ENCODE measurements at regions of chr2 and their contacts with region 1.

Region 1: GRCh38 chr2:37414470-37414949 is 70.1 kb downstream of the QPCT start:
- DNase-seq: no peak
- H3K4me3 Mint-ChIP-seq: no peak overlapping the region
- H3K27ac Mint-ChIP-seq: no peak overlapping the region
- H3K4me1 Mint-ChIP-seq: peaks cover 7% of the 10 kb centered on the region
- H3K27me3 Mint-ChIP-seq: no peaks in the 10 kb centered on the region
- CTCF ChIP-seq: peak; percentile 54

Region 2: DNA sequence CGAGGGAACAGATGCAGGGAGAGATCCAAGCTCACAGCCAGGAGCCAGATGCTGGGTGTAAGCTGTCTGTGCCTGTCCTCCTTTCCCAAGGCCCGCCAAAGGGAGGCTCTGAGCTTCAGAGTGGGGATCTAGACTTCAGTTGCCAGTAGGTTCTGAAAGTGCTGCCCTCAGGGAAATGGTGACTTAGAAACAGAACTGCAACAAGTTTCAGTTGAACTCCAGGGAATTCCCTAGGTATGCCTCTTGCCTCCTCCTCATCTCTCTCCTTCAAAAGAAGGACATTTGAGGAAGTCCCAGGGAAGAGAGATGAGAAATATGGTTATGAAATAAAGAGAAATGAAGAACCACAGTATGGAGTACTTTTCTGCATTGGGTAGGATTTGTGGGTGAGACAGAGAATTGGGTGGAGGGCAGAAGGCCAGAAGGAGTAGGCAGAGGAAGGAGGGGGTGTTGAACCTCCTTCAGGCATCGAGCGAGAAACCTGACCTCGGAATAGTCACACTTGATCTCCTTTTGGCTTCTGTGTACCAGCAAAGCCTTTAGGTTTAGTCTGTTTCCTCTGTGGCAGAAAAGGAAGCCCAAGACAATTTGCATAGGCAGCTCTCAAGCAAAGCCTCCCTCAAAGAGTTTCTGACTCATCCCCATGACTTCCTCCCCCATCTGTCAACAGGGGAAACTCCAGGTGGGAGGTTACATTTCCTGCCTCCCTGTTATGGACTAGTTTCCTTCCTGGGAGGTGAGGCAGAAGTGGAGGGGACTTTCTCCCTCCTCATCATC is 24.3 kb before region 1 on chr2:
- CTCF ChIA-PET with region 1: interaction called, 15 read pairs
- intact Hi-C with region 1: no loop called
- DNase-seq: peak; percentile 76
- H3K4me3 Mint-ChIP-seq: peak overlapping the region; percentile 12
- H3K27ac Mint-ChIP-seq: peak overlapping the region; percentile 63
- H3K4me1 Mint-ChIP-seq: no peaks in the 10 kb centered on the region
- H3K27me3 Mint-ChIP-seq: no peaks in the 10 kb centered on the region
- CTCF ChIP-seq: no peak

Region 3: DNA sequence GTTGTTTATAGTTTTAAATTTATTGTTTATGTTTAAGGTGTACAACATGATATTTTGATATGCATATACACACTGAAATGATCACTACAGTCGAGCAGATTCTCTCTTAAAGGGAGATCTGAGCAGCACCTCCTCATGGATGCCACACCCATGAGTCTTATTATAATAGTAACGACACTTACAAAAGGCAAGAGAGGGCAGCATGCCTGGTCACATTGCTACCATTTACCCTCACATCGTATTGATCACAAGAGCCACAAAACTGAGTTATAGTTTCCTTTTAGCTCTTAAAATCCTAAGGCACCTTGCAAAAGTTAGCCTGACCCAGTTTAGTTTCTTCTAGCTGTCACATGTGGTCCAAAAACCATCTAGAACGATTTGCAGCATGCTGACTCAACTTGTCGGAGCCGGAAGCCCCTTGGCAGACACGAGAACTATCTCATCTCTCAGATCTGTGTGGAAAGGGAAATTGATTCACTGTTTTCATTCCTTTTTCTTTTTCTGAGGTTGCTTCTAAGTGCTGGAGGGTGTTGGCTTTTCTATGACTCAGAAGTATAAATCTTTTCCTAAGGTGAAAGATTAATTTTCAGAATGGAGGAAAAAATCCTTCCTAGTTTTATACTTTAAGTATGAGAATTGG is 171.6 kb after region 1 on chr2:
- CTCF ChIA-PET with region 1: interaction called, 3 read pairs
- intact Hi-C with region 1: loop called (anchors 10 kb)
- DNase-seq: no peak
- H3K4me3 Mint-ChIP-seq: peak overlapping the region; percentile 21
- H3K27ac Mint-ChIP-seq: peak overlapping the region; percentile 81
- H3K4me1 Mint-ChIP-seq: peaks cover 80% of the 10 kb centered on the region
- H3K27me3 Mint-ChIP-seq: no peaks in the 10 kb centered on the region
- CTCF ChIP-seq: no peak

Region 4: GRCh38 chr2:37672104-37672869 is 257.8 kb after region 1 on chr2:
- CTCF ChIA-PET with region 1: interaction called, 6 read pairs
- intact Hi-C with region 1: loop called (anchors 1 kb)
- DNase-seq: peak; percentile 83
- H3K4me3 Mint-ChIP-seq: peak overlapping the region; percentile 95
- H3K27ac Mint-ChIP-seq: peak overlapping the region; percentile 19
- H3K4me1 Mint-ChIP-seq: peaks cover 59% of the 10 kb centered on the region
- H3K27me3 Mint-ChIP-seq: no peaks in the 10 kb centered on the region
- CTCF ChIP-seq: no peak

Region 5: GRCh38 chr2:37832590-37833197 is 418.2 kb after region 1 on chr2:
- CTCF ChIA-PET with region 1: interaction called, 79 read pairs
- intact Hi-C with region 1: loop called (anchors 1 kb)
- DNase-seq: peak; percentile 90
- H3K4me3 Mint-ChIP-seq: no peak overlapping the region
- H3K27ac Mint-ChIP-seq: no peak overlapping the region
- H3K4me1 Mint-ChIP-seq: peaks cover 9% of the 10 kb centered on the region
- H3K27me3 Mint-ChIP-seq: no peaks in the 10 kb centered on the region
- CTCF ChIP-seq: peak; percentile 75

Region 6: GRCh38 chr2:37877457-37878315 is 463.2 kb after region 1 on chr2:
- CTCF ChIA-PET with region 1: interaction called, 67 read pairs
- intact Hi-C with region 1: loop called (anchors 1 kb)
- DNase-seq: peak; percentile 47
- H3K4me3 Mint-ChIP-seq: no peak overlapping the region
- H3K27ac Mint-ChIP-seq: no peak overlapping the region
- H3K4me1 Mint-ChIP-seq: peaks cover 26% of the 10 kb centered on the region
- H3K27me3 Mint-ChIP-seq: no peaks in the 10 kb centered on the region
- CTCF ChIP-seq: peak; percentile 60